CD4-positive, alpha-beta memory T cell (primary cell): ENCODE measurements at regions of chr10 and their contacts with region 1.

Region 1: GRCh38 chr10:1240341-1240775 is 184.2 kb downstream of the WDR37 start:
- DNase-seq: peak in 2 of 5 donors; percentile 22 to 55
- H3K4me3 ChIP-seq: no peak overlapping the region
- H3K4me3 Mint-ChIP-seq: peak overlapping the region in 6 of 8 donors; percentile 42 to 94 (median 88)
- H3K27ac ChIP-seq: no peak overlapping the region
- H3K27ac Mint-ChIP-seq: peak overlapping the region in 5 of 7 donors; percentile 79 to 96 (median 83)
- H3K4me1 ChIP-seq: peaks cover 9% of the 10 kb centered on the region
- H3K4me1 Mint-ChIP-seq: peaks cover 2 to 22% (median 8%) of the 10 kb centered on the region in 4 donors
- H3K27me3 ChIP-seq: no peaks in the 10 kb centered on the region
- H3K27me3 Mint-ChIP-seq: peaks cover 9 to 13% of the 10 kb centered on the region in 2 donors

Region 2: GRCh38 chr10:1253523-1254353 is 13.4 kb after region 1 on chr10:
- CTCF ChIA-PET with region 1: interaction called, 3 read pairs
- POLR2A ChIA-PET with region 1: interaction called, 10 read pairs
- intact Hi-C with region 1: no loop called
- DNase-seq: no peak
- H3K4me3 ChIP-seq: no peak overlapping the region
- H3K4me3 Mint-ChIP-seq: peak overlapping the region in 3 of 8 donors; percentile 52 to 55 (median 55)
- H3K27ac ChIP-seq: no peak overlapping the region
- H3K27ac Mint-ChIP-seq: peak overlapping the region; percentile 3 to 87 (median 68)
- H3K4me1 ChIP-seq: peaks cover 32% of the 10 kb centered on the region
- H3K4me1 Mint-ChIP-seq: peaks cover 13 to 45% (median 36%) of the 10 kb centered on the region in 4 donors
- H3K27me3 ChIP-seq: peaks cover 13% of the 10 kb centered on the region
- H3K27me3 Mint-ChIP-seq: peaks cover 33 to 38% of the 10 kb centered on the region in 2 donors

Region 3: GRCh38 chr10:1308163-1308961 is 68.0 kb after region 1 on chr10:
- CTCF ChIA-PET with region 1: no interaction called
- POLR2A ChIA-PET with region 1: no interaction called
- intact Hi-C with region 1: no loop called
- DNase-seq: no peak
- H3K4me3 ChIP-seq: no peak overlapping the region
- H3K4me3 Mint-ChIP-seq: no peak overlapping the region
- H3K27ac ChIP-seq: no peak overlapping the region
- H3K27ac Mint-ChIP-seq: no peak overlapping the region
- H3K4me1 ChIP-seq: no peaks in the 10 kb centered on the region
- H3K4me1 Mint-ChIP-seq: no peaks in the 10 kb centered on the region
- H3K27me3 ChIP-seq: no peaks in the 10 kb centered on the region
- H3K27me3 Mint-ChIP-seq: peaks cover 0 to 1% of the 10 kb centered on the region in 2 donors